Posterior cingulate gyrus (tissue), 11 donors: ENCODE measurements at regions of chr2 and their contacts with region 1.

Region 1: GRCh38 chr2:176088048-176088936 is 4.2 kb upstream of the HOXD13 start:
- DNase-seq: peak in 8 of 10 donors; percentile 37 to 93 (median 54)

Region 2: GRCh38 chr2:175251425-175252041 is 836.8 kb before region 1 on chr2:
- intact Hi-C with region 1: loop called (anchors 5 kb)
- DNase-seq: no peak

Region 3: DNA sequence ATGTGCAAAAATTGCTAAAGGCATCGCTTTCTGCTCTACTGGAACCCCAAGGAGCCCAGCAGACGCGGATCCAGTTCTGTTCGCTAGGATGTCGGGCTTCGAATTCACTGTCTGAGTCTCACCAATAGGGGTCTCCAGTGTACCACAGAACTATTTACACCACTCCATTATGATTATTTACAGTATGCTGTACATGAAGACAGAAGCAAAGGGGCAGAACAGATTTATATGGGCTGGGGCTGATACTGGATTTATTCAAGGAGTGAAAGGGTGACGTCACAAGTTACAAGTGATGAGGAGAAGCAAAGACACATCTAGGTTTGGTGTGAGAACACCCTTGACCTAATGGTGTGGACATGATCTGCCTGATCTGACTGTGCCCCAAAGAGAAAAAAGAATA is 721.5 kb before region 1 on chr2:
- intact Hi-C with region 1: loop called (anchors 5 kb)
- DNase-seq: peak in 3 of 10 donors; percentile 9 to 68 (median 9)

Region 4: GRCh38 chr2:175690113-175690837 is 398.0 kb before region 1 on chr2:
- intact Hi-C with region 1: loop called (anchors 2 kb)
- DNase-seq: peak in 1 of 10 donors; percentile 15

Region 5: DNA sequence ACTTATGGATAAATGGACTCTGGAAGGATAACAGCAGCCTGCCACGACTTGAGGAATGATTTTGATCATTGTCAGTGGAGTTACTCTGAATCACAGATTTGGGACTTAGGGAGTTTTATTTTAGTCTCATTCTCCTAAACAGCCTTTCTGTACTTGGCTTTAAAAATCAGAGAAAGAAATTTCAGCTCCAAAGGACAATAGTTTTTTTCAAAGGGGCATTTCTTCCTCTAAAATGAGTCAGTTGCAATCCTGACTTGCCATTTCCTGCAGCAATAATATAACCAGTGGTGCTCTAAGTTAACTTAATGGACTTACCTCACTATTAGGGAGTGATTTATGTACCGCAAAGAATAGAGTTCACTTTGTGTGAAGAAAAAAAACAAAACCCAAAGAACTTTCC is 145.9 kb after region 1 on chr2:
- intact Hi-C with region 1: no loop called
- DNase-seq: no peak